Calu3 (cell line): ENCODE measurements at regions of chrX and their contacts with region 1.

Region 1: DNA sequence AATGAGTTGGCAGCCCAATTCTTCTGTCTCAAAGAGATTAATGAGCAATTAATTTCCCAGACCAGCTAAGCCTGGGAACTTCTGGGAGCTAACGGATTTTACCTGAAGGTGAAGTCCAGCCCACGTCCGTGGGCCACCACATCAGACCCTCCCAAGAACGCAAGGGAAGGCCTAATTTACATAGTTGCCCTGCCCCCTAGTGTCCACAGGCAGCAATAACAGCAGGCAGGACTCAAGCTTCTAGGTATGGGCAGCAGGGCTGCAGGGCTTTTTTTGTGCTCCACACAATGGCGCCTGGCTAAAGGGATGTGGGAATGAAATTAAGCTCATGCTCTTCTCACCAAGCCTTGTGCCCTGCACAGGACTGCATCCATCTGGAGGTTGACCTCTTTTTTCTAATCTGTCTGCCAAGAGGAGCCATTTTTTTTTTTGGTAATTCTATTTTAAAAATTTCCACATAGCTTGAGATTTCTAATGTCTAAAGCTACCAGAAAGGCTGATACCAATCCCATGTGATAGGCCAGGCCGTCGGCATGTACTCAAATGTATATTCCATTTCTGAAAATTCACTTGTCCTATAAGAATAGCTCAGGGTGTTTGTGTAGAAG is 111.9 kb upstream of the TMEM164 start:
- DNase-seq: peak; percentile 62
- H3K4me3 Mint-ChIP-seq: no peak overlapping the region
- H3K27ac Mint-ChIP-seq: no peak overlapping the region
- H3K4me1 Mint-ChIP-seq: no peaks in the 10 kb centered on the region
- H3K27me3 Mint-ChIP-seq: peaks cover 28% of the 10 kb centered on the region
- CTCF ChIP-seq: peak; percentile 75

Region 2: GRCh38 chrX:108699368-108699767 is 1191.6 kb before region 1 on chrX:
- CTCF ChIA-PET with region 1: no interaction called
- intact Hi-C with region 1: loop called (anchors 5 kb)
- DNase-seq: no peak
- H3K4me3 Mint-ChIP-seq: no peak overlapping the region
- H3K27ac Mint-ChIP-seq: no peak overlapping the region
- H3K4me1 Mint-ChIP-seq: no peaks in the 10 kb centered on the region
- H3K27me3 Mint-ChIP-seq: no peaks in the 10 kb centered on the region
- CTCF ChIP-seq: no peak

Region 3: DNA sequence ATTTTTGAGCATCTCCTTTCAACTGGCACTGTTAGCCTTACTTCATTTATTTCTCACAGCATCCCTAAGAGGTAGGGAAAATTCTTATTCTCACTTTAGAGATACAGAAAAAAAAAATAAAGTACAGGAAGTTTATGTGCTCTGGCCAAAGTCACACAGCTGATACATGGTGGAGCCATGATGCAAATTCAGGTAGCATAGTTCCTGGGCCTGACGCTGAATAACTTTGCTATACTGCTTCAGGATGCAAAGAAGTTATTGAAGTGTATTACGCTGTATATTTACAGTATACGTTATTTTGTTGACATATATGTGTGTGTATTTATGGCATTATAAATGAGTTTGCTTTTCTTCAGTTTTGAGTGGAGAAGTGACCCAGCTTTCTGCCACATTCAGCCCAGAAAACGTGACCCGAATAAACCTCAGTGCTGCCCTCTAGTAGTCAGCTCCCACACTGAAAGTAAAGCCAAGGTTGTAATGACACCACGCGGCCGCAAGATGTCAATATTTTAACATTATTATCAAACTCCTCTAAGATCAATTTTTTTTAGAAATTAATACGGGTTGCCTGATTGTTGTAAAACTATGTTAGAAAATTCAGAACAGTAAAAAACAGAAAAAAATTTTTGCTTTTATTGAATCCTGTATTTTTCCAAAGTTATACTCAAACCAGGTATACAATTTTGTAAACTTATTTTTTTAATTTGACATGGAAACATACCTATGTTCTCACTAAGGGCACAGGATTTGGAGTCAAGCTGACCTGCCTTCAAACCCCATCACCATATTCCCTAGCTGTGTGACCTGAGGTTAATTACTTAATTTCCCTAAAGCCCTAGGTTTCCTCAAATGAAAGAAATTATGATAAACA is 405.3 kb before region 1 on chrX:
- CTCF ChIA-PET with region 1: interaction called, 9 read pairs
- intact Hi-C with region 1: loop called (anchors 2 kb)
- DNase-seq: peak; percentile 50
- H3K4me3 Mint-ChIP-seq: no peak overlapping the region
- H3K27ac Mint-ChIP-seq: no peak overlapping the region
- H3K4me1 Mint-ChIP-seq: no peaks in the 10 kb centered on the region
- H3K27me3 Mint-ChIP-seq: peaks cover 26% of the 10 kb centered on the region
- CTCF ChIP-seq: peak; percentile 81

Region 4: GRCh38 chrX:109635176-109635575 is 255.8 kb before region 1 on chrX:
- CTCF ChIA-PET with region 1: interaction called, 6 read pairs
- intact Hi-C with region 1: loop called (anchors 5 kb)
- DNase-seq: peak; percentile 5
- H3K4me3 Mint-ChIP-seq: no peak overlapping the region
- H3K27ac Mint-ChIP-seq: no peak overlapping the region
- H3K4me1 Mint-ChIP-seq: no peaks in the 10 kb centered on the region
- H3K27me3 Mint-ChIP-seq: no peaks in the 10 kb centered on the region
- CTCF ChIP-seq: peak; percentile 52

Region 5: GRCh38 chrX:109709129-109709631 is 181.8 kb before region 1 on chrX:
- CTCF ChIA-PET with region 1: interaction called, 22 read pairs
- intact Hi-C with region 1: loop called (anchors 1 kb)
- DNase-seq: no peak
- H3K4me3 Mint-ChIP-seq: no peak overlapping the region
- H3K27ac Mint-ChIP-seq: no peak overlapping the region
- H3K4me1 Mint-ChIP-seq: peaks cover 8% of the 10 kb centered on the region
- H3K27me3 Mint-ChIP-seq: no peaks in the 10 kb centered on the region
- CTCF ChIP-seq: no peak

Region 6: GRCh38 chrX:109830704-109831206 is 60.2 kb before region 1 on chrX:
- CTCF ChIA-PET with region 1: no interaction called
- intact Hi-C with region 1: loop called (anchors 2 kb)
- DNase-seq: peak; percentile 34
- H3K4me3 Mint-ChIP-seq: no peak overlapping the region
- H3K27ac Mint-ChIP-seq: peak overlapping the region; percentile 83
- H3K4me1 Mint-ChIP-seq: peaks cover 27% of the 10 kb centered on the region
- H3K27me3 Mint-ChIP-seq: no peaks in the 10 kb centered on the region
- CTCF ChIP-seq: no peak

Region 7: DNA sequence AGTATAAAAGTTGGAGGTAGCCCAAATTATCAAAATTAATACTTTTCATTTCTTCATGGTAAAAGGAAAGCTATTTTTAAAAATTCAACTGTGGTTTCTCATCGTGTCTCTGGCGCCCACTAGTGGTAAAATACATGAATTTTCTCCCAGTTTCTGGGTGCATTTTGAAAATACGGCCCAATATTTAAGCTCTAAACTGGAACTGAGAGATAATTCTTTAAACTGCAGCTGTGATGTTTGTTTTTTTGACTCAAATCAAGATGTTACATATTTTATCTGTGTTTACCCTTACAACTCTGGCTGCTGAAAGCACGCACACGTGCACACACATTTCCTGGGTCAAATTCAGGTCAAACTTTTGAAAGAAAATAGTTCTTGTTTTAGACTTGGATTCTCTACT is 34.0 kb before region 1 on chrX:
- CTCF ChIA-PET with region 1: interaction called, 7 read pairs
- intact Hi-C with region 1: loop called (anchors 2 kb)
- DNase-seq: no peak
- H3K4me3 Mint-ChIP-seq: no peak overlapping the region
- H3K27ac Mint-ChIP-seq: no peak overlapping the region
- H3K4me1 Mint-ChIP-seq: peaks cover 52% of the 10 kb centered on the region
- H3K27me3 Mint-ChIP-seq: no peaks in the 10 kb centered on the region
- CTCF ChIP-seq: peak; percentile 36

Region 8: GRCh38 chrX:109959356-109959871 is 68.4 kb after region 1 on chrX:
- CTCF ChIA-PET with region 1: no interaction called
- intact Hi-C with region 1: no loop called
- DNase-seq: no peak
- H3K4me3 Mint-ChIP-seq: no peak overlapping the region
- H3K27ac Mint-ChIP-seq: no peak overlapping the region
- H3K4me1 Mint-ChIP-seq: no peaks in the 10 kb centered on the region
- H3K27me3 Mint-ChIP-seq: peaks cover 9% of the 10 kb centered on the region
- CTCF ChIP-seq: no peak

Region 9: GRCh38 chrX:110293658-110294057 is 402.7 kb after region 1 on chrX:
- CTCF ChIA-PET with region 1: no interaction called
- intact Hi-C with region 1: no loop called
- DNase-seq: no peak
- H3K4me3 Mint-ChIP-seq: no peak overlapping the region
- H3K27ac Mint-ChIP-seq: no peak overlapping the region
- H3K4me1 Mint-ChIP-seq: peaks cover 18% of the 10 kb centered on the region
- H3K27me3 Mint-ChIP-seq: no peaks in the 10 kb centered on the region
- CTCF ChIP-seq: no peak